ENCODE measurements at regions of chr3 and their contacts with region 1.

Region 1: DNA sequence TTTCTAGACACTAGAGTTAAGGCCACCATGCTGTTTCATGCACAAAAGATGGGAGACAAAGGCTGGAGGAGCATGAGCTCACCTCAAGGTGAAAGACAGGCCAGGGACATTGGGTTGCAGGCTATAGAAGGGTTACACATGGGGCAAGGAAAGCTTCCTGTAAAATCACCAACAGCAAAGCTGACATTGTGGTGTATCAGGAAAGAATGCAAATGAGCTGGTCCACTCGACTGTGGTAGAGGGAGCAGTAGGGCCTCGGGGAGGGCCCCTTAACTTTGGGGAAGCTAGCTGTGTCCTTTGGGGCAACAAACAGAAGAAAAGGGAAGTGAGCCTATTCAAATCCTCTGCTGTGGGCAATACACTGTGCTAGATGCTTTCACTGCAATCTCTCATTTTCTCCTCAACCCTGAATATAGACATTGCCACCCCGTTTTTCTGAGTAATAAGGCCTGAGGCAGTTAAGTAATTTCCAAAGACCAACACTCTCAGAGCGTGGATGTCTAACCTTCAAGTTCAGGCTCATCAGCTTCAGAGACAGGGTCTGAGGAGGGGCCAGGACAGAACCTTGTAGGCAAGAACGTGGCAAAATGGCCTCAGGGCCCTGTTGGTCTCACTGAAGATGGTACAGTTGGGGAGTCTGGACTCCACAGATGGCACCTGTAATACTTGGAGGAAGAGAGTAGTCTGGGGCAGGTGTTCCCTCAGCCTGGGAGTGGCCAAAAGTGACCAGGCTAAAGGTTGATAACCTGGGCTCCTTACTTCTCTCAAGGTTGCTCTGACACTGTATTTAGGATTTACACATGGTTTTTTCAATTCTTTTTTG is 24.1 kb downstream of the CX3CR1 start:
- DNase-seq: peak; percentile 57
- ATAC-seq: peak; percentile 96
- H3K4me3 Mint-ChIP-seq: peak overlapping the region; percentile 58
- H3K27ac Mint-ChIP-seq: peak overlapping the region; percentile 95
- H3K4me1 Mint-ChIP-seq: peaks cover 86% of the 10 kb centered on the region
- H3K27me3 Mint-ChIP-seq: no peaks in the 10 kb centered on the region
- CTCF ChIP-seq: no peak

Region 2: GRCh38 chr3:39107388-39108199 is 148.1 kb before region 1 on chr3 and contains the starts of genes GORASP1 and TTC21A:
- CTCF ChIA-PET with region 1: no interaction called
- POLR2A ChIA-PET with region 1: interaction called, 7 read pairs
- intact Hi-C with region 1: loop called (anchors 1 kb)
- DNase-seq: peak; percentile 64
- ATAC-seq: peak; percentile 50
- H3K4me3 Mint-ChIP-seq: peak within 1 kb of the TSS; percentile 98
- H3K27ac Mint-ChIP-seq: peak within 1 kb of the TSS; percentile 91
- H3K4me1 Mint-ChIP-seq: peaks cover 62% of the 10 kb centered on the region
- H3K27me3 Mint-ChIP-seq: no peaks in the 10 kb centered on the region
- CTCF ChIP-seq: no peak
- total RNA-seq, gene GORASP1: 41.6 and 47.8 TPM in 2 replicates
- total RNA-seq, gene TTC21A: 11.4 and 15.9 TPM in 2 replicates

Region 3: GRCh38 chr3:39180546-39181346 is 75.0 kb before region 1 on chr3:
- CTCF ChIA-PET with region 1: no interaction called
- POLR2A ChIA-PET with region 1: no interaction called
- intact Hi-C with region 1: loop called (anchors 1 kb)
- DNase-seq: peak; percentile 88
- ATAC-seq: peak; percentile 89
- H3K4me3 Mint-ChIP-seq: peak overlapping the region; percentile 73
- H3K27ac Mint-ChIP-seq: peak overlapping the region; percentile 77
- H3K4me1 Mint-ChIP-seq: peaks cover 31% of the 10 kb centered on the region
- H3K27me3 Mint-ChIP-seq: no peaks in the 10 kb centered on the region
- CTCF ChIP-seq: no peak

Region 4: DNA sequence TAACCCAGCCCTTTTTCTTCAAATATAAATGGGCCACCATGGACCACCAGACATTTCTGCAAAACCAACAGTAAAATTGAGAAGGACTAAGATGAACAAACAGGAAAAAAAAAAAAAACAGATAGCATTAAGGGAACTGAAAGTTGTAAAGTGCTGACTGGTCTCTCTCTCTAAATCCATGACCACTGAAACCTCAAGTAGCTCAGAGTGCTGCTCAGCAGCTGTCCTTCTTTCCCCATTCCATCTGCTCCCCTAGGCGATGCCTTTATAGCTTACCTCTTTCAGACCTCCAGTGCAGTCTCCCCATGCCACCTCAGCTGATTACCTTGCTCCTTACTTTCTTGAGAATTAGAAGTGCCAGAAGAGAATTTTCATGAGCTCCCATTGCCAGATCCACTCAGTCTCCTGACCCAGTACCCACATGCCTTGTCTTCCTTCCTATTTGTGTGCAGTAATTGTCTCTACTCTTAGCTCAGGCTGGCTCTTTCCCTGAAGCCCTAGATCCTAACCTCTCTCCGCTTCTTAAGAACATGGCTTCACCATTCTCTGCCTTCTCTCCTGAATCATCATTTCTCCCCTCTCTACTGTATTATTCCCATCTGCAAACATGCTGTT is 39.4 kb before region 1 on chr3:
- CTCF ChIA-PET with region 1: interaction called, 3 read pairs
- POLR2A ChIA-PET with region 1: interaction called, 6 read pairs
- intact Hi-C with region 1: loop called (anchors 1 kb)
- DNase-seq: no peak
- ATAC-seq: peak; percentile 94
- H3K4me3 Mint-ChIP-seq: peak overlapping the region; percentile 52
- H3K27ac Mint-ChIP-seq: peak overlapping the region; percentile 50
- H3K4me1 Mint-ChIP-seq: peaks cover 30% of the 10 kb centered on the region
- H3K27me3 Mint-ChIP-seq: peaks cover 3% of the 10 kb centered on the region
- CTCF ChIP-seq: no peak

Region 5: GRCh38 chr3:39234705-39235104 is 21.0 kb before region 1 on chr3:
- CTCF ChIA-PET with region 1: no interaction called
- POLR2A ChIA-PET with region 1: no interaction called
- intact Hi-C with region 1: loop called (anchors 2 kb)
- DNase-seq: no peak
- ATAC-seq: peak; percentile 37
- H3K4me3 Mint-ChIP-seq: no peak overlapping the region
- H3K27ac Mint-ChIP-seq: no peak overlapping the region
- H3K4me1 Mint-ChIP-seq: peaks cover 30% of the 10 kb centered on the region
- H3K27me3 Mint-ChIP-seq: peaks cover 6% of the 10 kb centered on the region
- CTCF ChIP-seq: no peak

Region 6: DNA sequence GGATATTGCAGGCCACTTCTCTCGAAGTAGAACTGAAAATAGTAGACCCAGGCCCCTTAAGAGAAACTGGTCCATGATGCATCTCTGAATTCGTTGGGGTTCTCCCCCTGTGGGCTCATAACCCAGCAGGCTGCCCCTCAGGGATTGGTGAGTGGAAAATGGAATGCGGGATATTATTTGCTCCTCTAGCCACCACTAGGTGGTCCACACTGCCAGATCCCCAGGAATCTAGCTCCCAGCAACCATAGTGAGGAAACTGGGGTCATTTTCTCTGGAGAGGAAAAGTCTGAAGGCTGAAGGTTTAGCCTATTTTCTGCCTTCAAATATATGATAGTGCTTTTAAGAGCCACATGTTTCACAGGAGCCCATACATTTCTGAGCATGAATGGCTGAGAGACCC is 17.4 kb after region 1 on chr3:
- CTCF ChIA-PET with region 1: no interaction called
- POLR2A ChIA-PET with region 1: no interaction called
- intact Hi-C with region 1: loop called (anchors 2 kb)
- DNase-seq: no peak
- ATAC-seq: no peak
- H3K4me3 Mint-ChIP-seq: no peak overlapping the region
- H3K27ac Mint-ChIP-seq: no peak overlapping the region
- H3K4me1 Mint-ChIP-seq: peaks cover 17% of the 10 kb centered on the region
- H3K27me3 Mint-ChIP-seq: no peaks in the 10 kb centered on the region
- CTCF ChIP-seq: no peak

Region 7: GRCh38 chr3:39388741-39389248 is 133.1 kb after region 1 on chr3:
- CTCF ChIA-PET with region 1: no interaction called
- POLR2A ChIA-PET with region 1: interaction called, 3 read pairs
- intact Hi-C with region 1: loop called (anchors 2 kb)
- DNase-seq: no peak
- ATAC-seq: peak; percentile 64
- H3K4me3 Mint-ChIP-seq: peak overlapping the region; percentile 71
- H3K27ac Mint-ChIP-seq: peak overlapping the region; percentile 91
- H3K4me1 Mint-ChIP-seq: peaks cover 68% of the 10 kb centered on the region
- H3K27me3 Mint-ChIP-seq: no peaks in the 10 kb centered on the region
- CTCF ChIP-seq: no peak

Measured in activated B cell treated with CpG ODN at 0.5 μM for 24 hours (primary cell).